Esophagus squamous epithelium (tissue), 5 donors: ENCODE measurements at regions of chr10 and their contacts with region 1.

Region 1: DNA sequence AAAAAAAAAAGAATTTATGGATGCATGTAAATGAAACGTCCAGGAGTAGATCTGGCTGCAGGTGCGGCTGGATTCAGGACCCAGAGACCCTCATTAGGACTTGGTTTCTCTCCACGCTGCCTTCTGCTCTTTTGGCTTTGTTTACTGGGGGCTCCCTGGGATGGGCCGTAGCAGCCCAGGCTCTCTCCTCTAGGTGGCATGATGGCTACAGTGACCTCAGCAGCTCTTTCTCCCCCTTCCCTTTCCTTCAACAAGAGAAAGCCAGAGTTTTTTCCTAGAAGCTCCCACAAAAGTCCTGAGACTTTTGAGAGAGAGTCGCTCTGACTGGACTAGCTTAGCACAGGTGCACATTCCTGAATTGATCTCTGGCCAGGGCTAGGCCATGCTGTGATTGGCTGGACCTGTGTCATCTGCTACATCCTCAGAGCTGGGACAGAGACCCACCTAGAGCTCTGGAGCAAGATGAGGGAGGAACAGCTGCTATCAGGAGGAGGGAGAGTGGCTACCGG is 67.8 kb upstream of the PDCD4 start:
- DNase-seq: no peak
- H3K4me3 ChIP-seq: no peak overlapping the region
- H3K27ac ChIP-seq: peak overlapping the region in 3 of 4 donors; percentile 1 to 79 (median 55)
- H3K4me1 ChIP-seq: peaks cover 24 to 50% (median 29%) of the 10 kb centered on the region in 3 donors
- H3K27me3 ChIP-seq: no peaks in the 10 kb centered on the region
- CTCF ChIP-seq: peak; percentile 51 to 69 (median 64)
- POLR2A ChIP-seq: no peak

Region 2: GRCh38 chr10:110871298-110872084 is 67.6 kb after region 1 on chr10 and contains the start of gene PDCD4:
- intact Hi-C with region 1: loop called (anchors 10 kb)
- DNase-seq: peak; percentile 81
- H3K4me3 ChIP-seq: peak within 1 kb of the TSS; percentile 75 to 97 (median 90)
- H3K27ac ChIP-seq: peak within 1 kb of the TSS; percentile 98 to 100 (median 100)
- H3K4me1 ChIP-seq: peaks cover 6 to 70% (median 31%) of the 10 kb centered on the region in 3 donors
- H3K27me3 ChIP-seq: no peaks in the 10 kb centered on the region
- CTCF ChIP-seq: peak in 1 of 6 experiments; percentile 12
- POLR2A ChIP-seq: peak in 3 of 4 donors; percentile 85 to 96 (median 93)
- total RNA-seq, gene PDCD4: 68.3 to 299 (median 171) TPM

Region 3: DNA sequence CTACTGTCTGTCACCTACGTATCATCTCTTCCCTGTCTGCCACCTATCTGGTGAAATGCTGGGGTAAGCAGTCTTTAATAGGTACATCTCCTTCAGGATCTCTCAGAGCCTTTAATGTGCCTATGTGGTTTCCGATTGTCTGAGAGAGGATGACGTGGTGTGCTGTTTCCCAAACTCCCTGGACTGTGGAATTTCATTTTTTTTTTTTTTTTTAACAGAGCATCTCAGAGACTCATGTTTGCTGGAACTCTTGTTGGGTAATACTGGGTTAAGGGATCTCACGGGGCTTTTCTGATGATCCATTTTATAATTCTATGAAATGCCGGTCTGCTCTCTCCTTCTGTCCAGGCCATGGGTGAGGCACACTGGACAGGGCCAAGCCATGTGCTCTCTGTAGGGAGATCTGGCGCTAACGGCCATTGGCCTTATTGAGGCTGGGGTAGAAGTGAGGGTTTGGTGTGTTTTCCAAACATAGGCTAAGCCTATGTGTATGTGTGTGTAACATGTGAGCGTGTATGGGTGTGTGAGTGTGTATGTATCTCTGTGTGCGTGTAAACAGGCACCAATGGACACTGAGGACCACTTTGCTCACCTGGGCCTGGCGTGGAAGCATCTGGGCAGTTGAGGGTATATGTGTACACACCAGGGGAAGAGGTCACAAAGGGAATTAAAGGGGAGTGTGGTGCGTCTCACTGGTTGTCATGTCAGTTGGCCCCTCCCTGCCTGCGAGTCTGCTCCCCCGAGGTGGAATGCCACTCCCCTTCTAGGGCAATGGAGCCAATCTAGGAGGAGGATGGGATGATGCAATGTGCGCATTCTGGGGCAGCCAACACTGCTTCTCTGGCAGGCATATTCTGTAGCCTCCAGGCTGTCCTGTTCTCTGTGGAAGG is 280.7 kb after region 1 on chr10:
- intact Hi-C with region 1: no loop called
- DNase-seq: no peak
- H3K4me3 ChIP-seq: no peak overlapping the region
- H3K27ac ChIP-seq: no peak overlapping the region
- H3K4me1 ChIP-seq: no peaks in the 10 kb centered on the region
- H3K27me3 ChIP-seq: peaks cover 0 to 25% (median 0%) of the 10 kb centered on the region in 4 donors
- CTCF ChIP-seq: no peak
- POLR2A ChIP-seq: no peak